Heart left ventricle (tissue), 16 donors: ENCODE measurements at regions of chr6 and their contacts with region 1.

Region 1: DNA sequence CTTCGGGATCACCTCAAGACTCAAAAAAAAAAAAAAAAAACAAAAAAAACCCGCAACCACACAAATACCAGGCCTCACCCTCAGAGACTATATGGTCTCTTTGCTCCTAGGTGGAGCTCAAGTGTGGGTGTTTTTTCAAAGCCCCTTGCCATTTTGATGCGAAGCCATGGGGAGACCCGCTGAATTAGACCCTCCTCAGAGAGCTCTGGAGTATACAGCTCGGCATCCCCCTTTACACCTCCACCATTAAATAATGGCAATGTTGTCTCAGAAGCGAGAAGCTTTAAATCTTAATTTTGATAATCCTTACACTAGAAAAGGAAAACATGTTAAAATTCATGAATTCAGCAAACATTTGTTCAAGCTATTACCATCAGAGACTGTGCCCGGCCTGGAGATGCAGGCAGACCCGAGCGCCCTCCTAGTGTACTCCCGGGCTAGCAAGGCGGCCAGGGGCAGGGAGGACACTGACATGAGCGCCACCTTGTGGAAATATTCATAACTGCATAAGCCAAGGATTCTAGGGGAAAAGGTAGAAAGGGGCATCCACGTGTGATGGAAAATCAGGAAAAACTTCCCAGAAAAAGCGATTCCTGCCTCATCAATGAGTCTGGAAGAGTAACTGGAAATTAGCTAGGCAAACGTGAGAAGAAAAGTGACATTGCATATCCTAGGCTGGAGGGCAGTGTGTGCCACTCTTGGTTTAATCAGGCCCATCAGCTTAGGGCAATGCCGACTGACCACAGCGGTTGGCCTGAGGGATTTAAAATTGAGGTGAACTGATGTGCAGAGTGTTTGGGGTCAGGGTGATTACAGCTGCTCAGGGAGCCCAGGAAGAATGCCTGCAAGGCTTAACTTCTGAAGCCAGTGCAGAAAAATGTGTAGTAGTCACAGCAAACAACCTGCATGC is 72.5 kb downstream of the B3GAT2 start:
- DNase-seq: peak; percentile 48 to 72 (median 57)
- ATAC-seq: peak; percentile 48 to 90 (median 85)
- H3K4me3 ChIP-seq: no peak overlapping the region
- H3K27ac ChIP-seq: no peak overlapping the region
- H3K4me1 ChIP-seq: no peaks in the 10 kb centered on the region
- H3K27me3 ChIP-seq: no peaks in the 10 kb centered on the region
- CTCF ChIP-seq: peak; percentile 79 to 96 (median 93)
- POLR2A ChIP-seq: no peak

Region 2: GRCh38 chr6:70310063-70310694 is 574.1 kb before region 1 on chr6:
- intact Hi-C with region 1: loop called in 2 of 10 experiments (anchors 10 kb)
- DNase-seq: no peak
- ATAC-seq: no peak
- H3K4me3 ChIP-seq: no peak overlapping the region
- H3K27ac ChIP-seq: no peak overlapping the region
- H3K4me1 ChIP-seq: no peaks in the 10 kb centered on the region
- H3K27me3 ChIP-seq: peaks cover 0 to 9% (median 0%) of the 10 kb centered on the region in 9 donors
- CTCF ChIP-seq: peak; percentile 39 to 73 (median 58)
- POLR2A ChIP-seq: no peak

Region 3: GRCh38 chr6:70547313-70547712 is 337.0 kb before region 1 on chr6:
- intact Hi-C with region 1: loop called in 9 of 10 experiments (anchors 2 to 10 kb)
- DNase-seq: no peak
- ATAC-seq: peak; percentile 69 to 86 (median 77)
- H3K4me3 ChIP-seq: no peak overlapping the region
- H3K27ac ChIP-seq: peak overlapping the region in 1 of 12 donors; percentile 5
- H3K4me1 ChIP-seq: peaks cover 0 to 7% (median 0%) of the 10 kb centered on the region in 12 donors
- H3K27me3 ChIP-seq: no peaks in the 10 kb centered on the region
- CTCF ChIP-seq: peak in 11 of 12 donors; percentile 17 to 61 (median 47)
- POLR2A ChIP-seq: no peak

Region 4: DNA sequence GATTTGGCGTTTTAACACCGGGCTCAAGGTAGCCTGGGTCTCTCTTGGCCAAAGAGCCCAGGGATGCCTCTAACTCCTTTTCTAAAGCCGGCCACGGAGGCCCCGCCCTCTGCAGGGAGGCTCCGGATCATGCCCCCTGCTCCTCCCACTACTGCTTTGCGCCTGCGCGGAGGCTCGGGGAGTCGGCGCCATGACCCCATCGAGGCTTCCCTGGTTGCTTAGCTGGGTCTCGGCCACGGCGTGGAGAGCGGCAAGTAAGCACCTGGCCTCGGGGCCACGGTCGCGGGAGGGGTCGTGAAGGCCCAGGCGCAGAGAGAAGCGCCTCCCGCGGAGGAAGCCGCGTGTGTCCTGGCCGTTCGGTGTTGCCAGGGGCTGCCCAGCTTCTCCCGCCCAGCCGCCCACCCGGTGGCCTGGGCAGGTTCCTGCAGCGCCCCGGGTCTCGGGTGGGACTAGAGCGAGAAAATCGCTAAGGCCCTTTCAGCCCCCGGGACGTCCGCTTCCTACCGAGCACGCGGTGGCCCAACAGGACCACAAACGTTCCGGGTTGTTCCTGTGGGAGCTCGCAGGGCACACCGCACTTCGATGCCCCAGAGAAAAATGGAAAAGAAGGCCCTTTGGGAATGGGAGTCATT is 317.5 kb before region 1 on chr6 and contains the start of gene SDHAF4:
- intact Hi-C with region 1: loop called in 1 of 10 experiments (anchors 10 kb)
- DNase-seq: peak; percentile 92 to 97 (median 96)
- ATAC-seq: peak; percentile 100
- H3K4me3 ChIP-seq: peak within 1 kb of the TSS; percentile 74 to 98 (median 79)
- H3K27ac ChIP-seq: peak within 1 kb of the TSS; percentile 53 to 96 (median 86)
- H3K4me1 ChIP-seq: peaks cover 0 to 15% (median 5%) of the 10 kb centered on the region in 12 donors
- H3K27me3 ChIP-seq: no peaks in the 10 kb centered on the region
- CTCF ChIP-seq: peak in 2 of 12 donors; percentile 24 to 26
- POLR2A ChIP-seq: peak in 1 of 2 donors; percentile 84
- total RNA-seq, gene SDHAF4: 8.8 to 21.3 (median 14.3) TPM

Region 5: GRCh38 chr6:70706491-70707123 is 177.7 kb before region 1 on chr6:
- intact Hi-C with region 1: loop called (anchors 1 to 2 kb)
- DNase-seq: no peak
- ATAC-seq: no peak
- H3K4me3 ChIP-seq: no peak overlapping the region
- H3K27ac ChIP-seq: no peak overlapping the region
- H3K4me1 ChIP-seq: peaks cover 0 to 36% (median 9%) of the 10 kb centered on the region in 12 donors
- H3K27me3 ChIP-seq: no peaks in the 10 kb centered on the region
- CTCF ChIP-seq: peak; percentile 53 to 86 (median 74)
- POLR2A ChIP-seq: no peak

Region 6: DNA sequence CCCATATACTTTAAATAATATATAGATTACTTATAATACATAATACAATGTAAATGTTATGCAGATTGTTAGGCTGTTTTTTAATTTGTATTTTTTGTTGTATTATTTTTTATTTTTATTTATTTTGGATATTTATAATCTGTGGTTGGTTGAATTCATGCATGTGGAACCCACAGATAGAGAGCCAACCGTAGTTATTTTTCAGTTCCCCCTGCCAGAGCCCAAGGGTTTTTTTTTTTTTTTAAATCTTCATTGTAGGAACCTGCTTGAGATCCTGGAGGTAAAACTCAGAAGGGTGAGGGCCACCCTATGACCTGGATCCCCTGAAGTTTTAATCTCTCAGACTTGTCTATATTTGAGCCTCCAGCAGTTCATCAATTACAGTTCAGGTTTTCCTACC is 60.7 kb before region 1 on chr6:
- intact Hi-C with region 1: no loop called
- DNase-seq: no peak
- ATAC-seq: no peak
- H3K4me3 ChIP-seq: no peak overlapping the region
- H3K27ac ChIP-seq: no peak overlapping the region
- H3K4me1 ChIP-seq: peaks cover 0 to 4% (median 0%) of the 10 kb centered on the region in 12 donors
- H3K27me3 ChIP-seq: no peaks in the 10 kb centered on the region
- CTCF ChIP-seq: no peak
- POLR2A ChIP-seq: no peak